ENCODE measurements at regions of chr22 and their contacts with region 1.

Region 1: DNA sequence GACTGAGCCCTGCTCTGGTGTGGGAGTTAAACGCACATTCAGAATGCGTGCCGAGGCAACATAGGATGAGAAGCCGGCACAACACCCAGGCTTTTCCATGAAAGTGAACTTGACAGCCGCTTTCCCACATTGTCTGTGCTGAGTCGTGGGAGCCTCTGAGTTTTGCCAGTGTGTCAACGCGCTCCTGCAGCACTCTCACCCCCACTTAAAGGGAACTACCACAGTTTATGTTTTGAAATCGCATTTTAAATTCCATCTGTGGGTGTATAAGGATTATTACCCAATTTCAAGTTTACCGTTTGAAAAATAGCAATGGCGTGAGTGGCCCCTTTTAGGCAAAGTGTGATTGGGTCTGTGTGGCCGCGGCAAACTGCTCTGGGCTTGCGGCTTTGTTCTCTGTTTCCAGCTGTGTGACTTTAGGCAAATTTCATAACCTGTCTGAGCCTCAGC is 81.5 kb downstream of the FBLN1 start:
- DNase-seq: no peak
- H3K4me3 ChIP-seq: no peak overlapping the region
- H3K27ac ChIP-seq: no peak overlapping the region
- H3K4me1 ChIP-seq: no peaks in the 10 kb centered on the region
- H3K27me3 ChIP-seq: no peaks in the 10 kb centered on the region
- CTCF ChIP-seq: no peak

Region 2: DNA sequence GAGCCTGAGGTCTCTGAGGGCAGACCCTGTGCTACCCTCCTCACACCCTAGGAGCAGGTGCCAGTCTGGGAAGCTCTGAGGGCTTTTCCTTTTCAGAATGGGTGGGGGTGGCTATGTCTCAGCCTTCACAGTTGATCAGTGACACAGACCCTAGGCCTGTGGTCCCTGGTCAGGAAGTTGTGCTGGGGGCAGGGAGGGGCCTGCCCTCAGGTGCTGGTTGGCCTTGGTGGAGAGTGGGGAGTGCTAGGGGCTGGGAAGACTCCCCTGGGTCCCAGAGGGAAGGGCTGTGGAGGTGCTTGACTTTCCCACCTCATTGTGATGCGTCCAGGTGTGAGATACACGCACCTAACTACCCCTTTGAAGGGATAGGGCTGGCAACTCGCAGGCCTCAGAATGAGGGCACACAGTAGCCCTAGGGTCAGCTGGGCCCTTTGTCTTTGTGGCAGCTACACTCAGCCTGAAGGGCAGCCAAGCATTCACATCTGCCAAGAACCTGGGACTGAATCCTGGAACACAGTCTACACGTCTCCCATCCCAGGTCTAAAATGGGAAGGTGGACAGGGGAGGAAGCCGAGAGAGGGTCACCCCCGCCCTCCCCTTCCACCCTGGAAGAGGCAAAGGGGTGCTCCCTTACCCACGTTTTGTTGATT is 56.3 kb after region 1 on chr22:
- intact Hi-C with region 1: loop called (anchors 5 kb)
- DNase-seq: no peak
- H3K4me3 ChIP-seq: no peak overlapping the region
- H3K27ac ChIP-seq: no peak overlapping the region
- H3K4me1 ChIP-seq: peaks cover 6% of the 10 kb centered on the region
- H3K27me3 ChIP-seq: no peaks in the 10 kb centered on the region
- CTCF ChIP-seq: no peak